ENCODE measurements at regions of chr16 and their contacts with region 1.

Region 1: GRCh38 chr16:636206-637080 is at the start of gene METTL26:
- DNase-seq: peak; percentile 84 to 97 (median 94)
- ATAC-seq: peak; percentile 81
- H3K4me3 ChIP-seq: peak within 1 kb of the TSS; percentile 77 to 97
- H3K4me3 Mint-ChIP-seq: peak within 1 kb of the TSS; percentile 98
- H3K27ac ChIP-seq: peak within 1 kb of the TSS; percentile 56 to 91
- H3K27ac Mint-ChIP-seq: peak within 1 kb of the TSS; percentile 96
- H3K4me1 ChIP-seq: peaks cover 22% of the 10 kb centered on the region
- H3K4me1 Mint-ChIP-seq: peaks cover 10% of the 10 kb centered on the region
- H3K27me3 ChIP-seq: no peaks in the 10 kb centered on the region
- H3K27me3 Mint-ChIP-seq: no peaks in the 10 kb centered on the region
- CTCF ChIP-seq: no peak
- total RNA-seq, gene METTL26: 37.4 to 43.1 TPM

Region 2: GRCh38 chr16:401468-402348 is 234.7 kb before region 1 on chr16 and contains the start of gene DECR2:
- CTCF ChIA-PET with region 1: no interaction called
- POLR2A ChIA-PET with region 1: no interaction called
- intact Hi-C with region 1: loop called (anchors 1 to 5 kb)
- DNase-seq: peak; percentile 96 to 100 (median 98)
- ATAC-seq: peak; percentile 88
- H3K4me3 ChIP-seq: peak within 1 kb of the TSS; percentile 88 to 91
- H3K4me3 Mint-ChIP-seq: peak within 1 kb of the TSS; percentile 90
- H3K27ac ChIP-seq: peak within 1 kb of the TSS; percentile 75 to 82
- H3K27ac Mint-ChIP-seq: peak within 1 kb of the TSS; percentile 98
- H3K4me1 ChIP-seq: peaks cover 11% of the 10 kb centered on the region
- H3K4me1 Mint-ChIP-seq: peaks cover 13% of the 10 kb centered on the region
- H3K27me3 ChIP-seq: no peaks in the 10 kb centered on the region
- H3K27me3 Mint-ChIP-seq: no peaks in the 10 kb centered on the region
- CTCF ChIP-seq: peak; percentile 55
- total RNA-seq, gene DECR2: 6.1 to 7.9 TPM

Region 3: DNA sequence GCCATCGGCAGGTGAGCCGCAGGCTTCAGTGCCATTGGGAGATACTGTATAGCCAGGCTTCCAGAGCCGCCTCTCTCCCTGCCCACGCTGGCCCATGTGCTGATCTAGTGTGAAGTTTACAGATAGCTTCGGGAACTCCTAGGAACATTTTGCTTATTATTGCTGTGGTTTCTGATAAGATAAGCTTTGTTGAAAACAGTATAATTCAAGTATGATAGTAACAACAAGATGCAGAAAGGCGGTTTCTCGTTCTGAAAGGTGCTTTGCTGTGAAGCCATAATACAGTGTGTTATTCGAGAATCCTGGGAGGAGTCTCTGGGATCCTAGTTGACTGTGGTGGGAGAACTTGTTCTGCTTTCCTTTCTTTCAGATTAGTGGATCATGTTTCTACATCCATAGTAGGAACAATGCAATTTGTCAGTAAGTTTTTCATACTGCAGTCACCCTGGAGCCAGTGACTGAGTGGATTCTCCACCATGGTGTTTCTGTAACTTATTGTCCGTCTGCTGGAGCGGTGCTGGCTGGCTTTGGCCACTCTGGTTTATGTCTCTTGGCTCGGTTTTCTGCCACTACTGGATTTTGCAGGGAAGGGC is 179.5 kb before region 1 on chr16:
- CTCF ChIA-PET with region 1: no interaction called
- POLR2A ChIA-PET with region 1: no interaction called
- intact Hi-C with region 1: no loop called
- DNase-seq: no peak
- ATAC-seq: no peak
- H3K4me3 ChIP-seq: no peak overlapping the region
- H3K4me3 Mint-ChIP-seq: no peak overlapping the region
- H3K27ac ChIP-seq: no peak overlapping the region
- H3K27ac Mint-ChIP-seq: peak overlapping the region; percentile 2
- H3K4me1 ChIP-seq: no peaks in the 10 kb centered on the region
- H3K4me1 Mint-ChIP-seq: peaks cover 9% of the 10 kb centered on the region
- H3K27me3 ChIP-seq: no peaks in the 10 kb centered on the region
- H3K27me3 Mint-ChIP-seq: no peaks in the 10 kb centered on the region
- CTCF ChIP-seq: no peak

Region 4: GRCh38 chr16:569445-570254 is 66.8 kb before region 1 on chr16 and contains the start of gene PIGQ:
- CTCF ChIA-PET with region 1: no interaction called
- POLR2A ChIA-PET with region 1: interaction called, 4 read pairs
- intact Hi-C with region 1: loop called in 1 of 2 experiments (anchors 5 kb)
- DNase-seq: peak; percentile 40 to 81 (median 59)
- ATAC-seq: peak; percentile 77
- H3K4me3 ChIP-seq: peak within 1 kb of the TSS; percentile 66 to 84
- H3K4me3 Mint-ChIP-seq: peak within 1 kb of the TSS; percentile 83
- H3K27ac ChIP-seq: peak within 1 kb of the TSS; percentile 65 to 82
- H3K27ac Mint-ChIP-seq: peak within 1 kb of the TSS; percentile 89
- H3K4me1 ChIP-seq: peaks cover 44% of the 10 kb centered on the region
- H3K4me1 Mint-ChIP-seq: peaks cover 32% of the 10 kb centered on the region
- H3K27me3 ChIP-seq: no peaks in the 10 kb centered on the region
- H3K27me3 Mint-ChIP-seq: no peaks in the 10 kb centered on the region
- CTCF ChIP-seq: no peak
- total RNA-seq, gene PIGQ: 25.9 to 31.0 TPM

Region 5: GRCh38 chr16:648781-649589 is 12.5 kb after region 1 on chr16 and contains the start of gene WDR90:
- CTCF ChIA-PET with region 1: interaction called, 6 read pairs
- POLR2A ChIA-PET with region 1: interaction called, 7 read pairs
- intact Hi-C with region 1: loop called (anchors 1 kb)
- DNase-seq: peak; percentile 74 to 96 (median 92)
- ATAC-seq: peak; percentile 91
- H3K4me3 ChIP-seq: peak within 1 kb of the TSS; percentile 66 to 88
- H3K4me3 Mint-ChIP-seq: peak within 1 kb of the TSS; percentile 79
- H3K27ac ChIP-seq: peak within 1 kb of the TSS; percentile 72 to 91
- H3K27ac Mint-ChIP-seq: peak within 1 kb of the TSS; percentile 81
- H3K4me1 ChIP-seq: peaks cover 19% of the 10 kb centered on the region
- H3K4me1 Mint-ChIP-seq: peaks cover 20% of the 10 kb centered on the region
- H3K27me3 ChIP-seq: no peaks in the 10 kb centered on the region
- H3K27me3 Mint-ChIP-seq: no peaks in the 10 kb centered on the region
- CTCF ChIP-seq: no peak
- total RNA-seq, gene WDR90: 15.0 to 22.8 TPM

Region 6: GRCh38 chr16:684067-684794 is 47.8 kb after region 1 on chr16 and contains the start of gene JMJD8:
- CTCF ChIA-PET with region 1: interaction called, 4 read pairs
- POLR2A ChIA-PET with region 1: interaction called, 5 read pairs
- intact Hi-C with region 1: loop called (anchors 1 kb)
- DNase-seq: peak; percentile 88 to 98 (median 97)
- ATAC-seq: peak; percentile 43
- H3K4me3 ChIP-seq: peak within 1 kb of the TSS; percentile 60 to 66
- H3K4me3 Mint-ChIP-seq: peak within 1 kb of the TSS; percentile 78
- H3K27ac ChIP-seq: peak within 1 kb of the TSS; percentile 69 to 80
- H3K27ac Mint-ChIP-seq: peak within 1 kb of the TSS; percentile 72
- H3K4me1 ChIP-seq: peaks cover 39% of the 10 kb centered on the region
- H3K4me1 Mint-ChIP-seq: peaks cover 35% of the 10 kb centered on the region
- H3K27me3 ChIP-seq: no peaks in the 10 kb centered on the region
- H3K27me3 Mint-ChIP-seq: no peaks in the 10 kb centered on the region
- CTCF ChIP-seq: no peak
- total RNA-seq, gene JMJD8: 15.8 to 18.7 TPM

Region 7: DNA sequence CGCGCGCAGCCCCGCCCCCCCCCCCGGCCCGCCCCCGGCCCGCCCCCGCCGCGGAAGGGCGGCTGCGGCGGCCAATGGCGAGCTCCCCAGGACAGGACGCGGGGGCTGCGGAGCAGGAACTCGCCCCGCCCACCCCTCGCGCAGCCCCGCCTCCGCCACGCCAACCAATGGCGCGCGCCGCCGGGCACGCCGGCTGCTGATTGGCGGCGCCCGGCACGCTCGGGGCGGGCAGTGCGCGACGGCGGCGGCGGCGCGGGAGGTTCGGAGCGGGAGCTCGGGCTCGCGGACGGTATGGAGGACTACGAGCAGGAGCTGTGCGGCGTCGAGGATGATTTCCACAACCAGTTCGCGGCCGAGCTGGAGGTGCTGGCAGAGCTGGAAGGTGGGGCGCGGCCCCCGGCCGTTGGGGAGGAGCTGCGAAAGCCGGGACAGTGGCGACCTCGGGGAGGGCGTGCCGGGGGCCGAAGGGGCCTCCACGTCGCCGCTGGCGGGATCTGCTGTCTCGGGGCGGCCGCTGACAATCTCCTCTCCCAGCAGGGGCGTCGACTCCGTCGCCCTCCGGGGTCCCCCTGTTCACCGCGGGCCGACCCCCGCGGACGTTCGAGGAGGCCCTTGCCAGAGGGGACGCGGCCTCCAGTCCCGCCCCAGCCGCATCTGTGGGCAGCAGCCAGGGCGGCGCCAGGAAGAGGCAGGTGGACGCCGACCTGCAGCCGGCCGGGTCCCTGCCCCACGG is 152.1 kb after region 1 on chr16 and contains the start of gene CHTF18:
- CTCF ChIA-PET with region 1: no interaction called
- POLR2A ChIA-PET with region 1: interaction called, 3 read pairs
- intact Hi-C with region 1: loop called (anchors 2 kb)
- DNase-seq: peak; percentile 88 to 96 (median 92)
- ATAC-seq: peak; percentile 98
- H3K4me3 ChIP-seq: peak within 1 kb of the TSS; percentile 81 to 97
- H3K4me3 Mint-ChIP-seq: peak within 1 kb of the TSS; percentile 84
- H3K27ac ChIP-seq: peak within 1 kb of the TSS; percentile 10 to 53
- H3K27ac Mint-ChIP-seq: peak within 1 kb of the TSS; percentile 49
- H3K4me1 ChIP-seq: peaks cover 19% of the 10 kb centered on the region
- H3K4me1 Mint-ChIP-seq: peaks cover 7% of the 10 kb centered on the region
- H3K27me3 ChIP-seq: no peaks in the 10 kb centered on the region
- H3K27me3 Mint-ChIP-seq: no peaks in the 10 kb centered on the region
- CTCF ChIP-seq: no peak
- total RNA-seq, gene CHTF18: 34.4 to 38.4 TPM

Region 8: GRCh38 chr16:1420111-1420540 is 783.7 kb after region 1 on chr16:
- CTCF ChIA-PET with region 1: no interaction called
- POLR2A ChIA-PET with region 1: no interaction called
- intact Hi-C with region 1: loop called in 1 of 2 experiments (anchors 2 kb)
- DNase-seq: peak in 1 of 9 experiments; percentile 16
- ATAC-seq: no peak
- H3K4me3 ChIP-seq: peak overlapping the region; percentile 85 to 95
- H3K4me3 Mint-ChIP-seq: peak overlapping the region; percentile 92
- H3K27ac ChIP-seq: peak overlapping the region; percentile 81 to 98
- H3K27ac Mint-ChIP-seq: peak overlapping the region; percentile 76
- H3K4me1 ChIP-seq: peaks cover 19% of the 10 kb centered on the region
- H3K4me1 Mint-ChIP-seq: peaks cover 29% of the 10 kb centered on the region
- H3K27me3 ChIP-seq: no peaks in the 10 kb centered on the region
- H3K27me3 Mint-ChIP-seq: no peaks in the 10 kb centered on the region
- CTCF ChIP-seq: no peak

Measured in CD8-positive, alpha-beta T cell (primary cell).